ENCODE measurements at regions of chr9 and their contacts with region 1.

Region 1: GRCh38 chr9:131481441-131482342 is 21.0 kb upstream of the POMT1 start:
- DNase-seq: no peak
- CTCF ChIP-seq: no peak

Region 2: GRCh38 chr9:131366761-131367401 is 114.8 kb before region 1 on chr9:
- in situ Hi-C with region 1: loop called (anchors 10 kb)
- DNase-seq: no peak
- CTCF ChIP-seq: peak; percentile 32

Measured in GM13976 (cell line).